Natural killer cell (primary cell): ENCODE measurements at regions of chr15 and their contacts with region 1.

Region 1: GRCh38 chr15:23532019-23532418 is 33.5 kb upstream of the MKRN3 start:
- DNase-seq: no peak
- ATAC-seq: no peak
- H3K4me3 ChIP-seq: no peak overlapping the region
- H3K4me3 Mint-ChIP-seq: no peak overlapping the region
- H3K27ac ChIP-seq: no peak overlapping the region
- H3K27ac Mint-ChIP-seq: no peak overlapping the region
- H3K4me1 ChIP-seq: no peaks in the 10 kb centered on the region
- H3K4me1 Mint-ChIP-seq: no peaks in the 10 kb centered on the region
- H3K27me3 ChIP-seq: no peaks in the 10 kb centered on the region
- H3K27me3 Mint-ChIP-seq: no peaks in the 10 kb centered on the region
- CTCF ChIP-seq: no peak

Region 2: GRCh38 chr15:23457890-23458289 is 74.1 kb before region 1 on chr15:
- intact Hi-C with region 1: no loop called
- DNase-seq: no peak
- ATAC-seq: no peak
- H3K4me3 ChIP-seq: no peak overlapping the region
- H3K4me3 Mint-ChIP-seq: no peak overlapping the region
- H3K27ac ChIP-seq: no peak overlapping the region
- H3K27ac Mint-ChIP-seq: no peak overlapping the region
- H3K4me1 ChIP-seq: no peaks in the 10 kb centered on the region
- H3K4me1 Mint-ChIP-seq: no peaks in the 10 kb centered on the region
- H3K27me3 ChIP-seq: no peaks in the 10 kb centered on the region
- H3K27me3 Mint-ChIP-seq: no peaks in the 10 kb centered on the region
- CTCF ChIP-seq: no peak

Region 3: DNA sequence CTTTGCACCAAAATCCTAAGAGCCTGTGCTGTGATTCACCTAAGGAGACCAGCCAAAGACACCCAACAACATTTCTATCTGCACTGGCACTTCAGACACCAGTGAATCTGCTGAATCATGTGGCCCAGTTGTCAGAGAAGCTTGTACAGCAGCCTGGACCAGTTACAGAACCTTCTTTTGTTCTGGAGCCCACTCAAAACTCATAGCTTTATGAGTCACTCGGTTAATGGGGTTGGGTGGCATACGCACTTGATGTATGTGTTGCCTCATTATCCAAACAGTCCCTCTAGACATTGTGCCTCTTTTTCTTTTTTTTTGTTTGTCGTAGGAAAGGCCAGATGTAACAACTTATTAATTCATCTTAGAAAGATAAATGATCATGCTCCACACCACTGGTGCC is 59.3 kb before region 1 on chr15:
- intact Hi-C with region 1: loop called (anchors 10 kb)
- DNase-seq: no peak
- ATAC-seq: no peak
- H3K4me3 ChIP-seq: no peak overlapping the region
- H3K4me3 Mint-ChIP-seq: no peak overlapping the region
- H3K27ac ChIP-seq: no peak overlapping the region
- H3K27ac Mint-ChIP-seq: no peak overlapping the region
- H3K4me1 ChIP-seq: no peaks in the 10 kb centered on the region
- H3K4me1 Mint-ChIP-seq: no peaks in the 10 kb centered on the region
- H3K27me3 ChIP-seq: no peaks in the 10 kb centered on the region
- H3K27me3 Mint-ChIP-seq: no peaks in the 10 kb centered on the region
- CTCF ChIP-seq: no peak

Region 4: DNA sequence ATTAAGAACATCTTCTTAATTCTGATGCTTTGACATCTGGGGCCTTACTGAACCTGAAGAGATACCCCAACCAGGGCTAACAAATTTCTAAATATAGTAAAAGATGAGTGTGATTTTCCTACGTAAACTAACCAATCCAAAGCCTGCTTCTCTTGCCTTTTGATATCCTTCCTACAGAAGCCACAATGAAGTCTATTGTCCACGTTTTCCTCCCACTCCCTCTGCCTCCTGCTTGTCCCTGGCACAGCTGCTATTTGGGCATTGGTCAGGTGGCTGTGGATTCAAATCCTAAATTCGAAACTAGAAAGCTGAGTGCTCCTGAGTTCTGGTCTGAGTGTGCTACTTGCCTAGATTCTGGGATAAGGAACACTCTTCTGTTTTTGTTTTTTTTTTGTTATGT is 16.1 kb after region 1 on chr15:
- intact Hi-C with region 1: no loop called
- DNase-seq: no peak
- ATAC-seq: no peak
- H3K4me3 ChIP-seq: no peak overlapping the region
- H3K4me3 Mint-ChIP-seq: no peak overlapping the region
- H3K27ac ChIP-seq: no peak overlapping the region
- H3K27ac Mint-ChIP-seq: no peak overlapping the region
- H3K4me1 ChIP-seq: no peaks in the 10 kb centered on the region
- H3K4me1 Mint-ChIP-seq: no peaks in the 10 kb centered on the region
- H3K27me3 ChIP-seq: no peaks in the 10 kb centered on the region
- H3K27me3 Mint-ChIP-seq: no peaks in the 10 kb centered on the region
- CTCF ChIP-seq: no peak

Region 5: DNA sequence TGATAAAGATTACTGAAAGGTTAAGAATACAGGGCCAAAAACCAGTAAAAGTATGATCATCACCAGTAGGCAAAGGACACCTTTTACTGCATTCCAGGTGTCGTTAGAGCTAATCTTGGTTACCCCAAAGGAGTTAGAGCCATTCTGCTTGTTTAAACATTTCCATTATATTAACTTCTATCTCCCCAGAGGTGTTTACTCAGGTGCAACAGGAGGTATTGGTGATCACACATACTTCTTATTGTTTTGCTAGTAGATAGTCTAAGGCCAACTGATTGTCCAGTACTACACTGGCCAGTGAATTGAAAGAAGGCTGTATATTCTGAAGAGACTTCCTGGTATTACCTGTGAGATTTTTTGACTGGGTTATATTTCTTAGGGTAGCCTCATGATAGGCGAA is 56.2 kb after region 1 on chr15:
- intact Hi-C with region 1: no loop called
- DNase-seq: no peak
- ATAC-seq: no peak
- H3K4me3 ChIP-seq: no peak overlapping the region
- H3K4me3 Mint-ChIP-seq: no peak overlapping the region
- H3K27ac ChIP-seq: no peak overlapping the region
- H3K27ac Mint-ChIP-seq: no peak overlapping the region
- H3K4me1 ChIP-seq: no peaks in the 10 kb centered on the region
- H3K4me1 Mint-ChIP-seq: no peaks in the 10 kb centered on the region
- H3K27me3 ChIP-seq: no peaks in the 10 kb centered on the region
- H3K27me3 Mint-ChIP-seq: no peaks in the 10 kb centered on the region
- CTCF ChIP-seq: no peak